ENCODE measurements at regions of chr13 and their contacts with region 1.

Region 1: GRCh38 chr13:27251166-27252091 is at the start of gene RPL21:
- DNase-seq: peak; percentile 85 to 97 (median 90)
- ATAC-seq: peak; percentile 89
- H3K4me3 ChIP-seq: peak within 1 kb of the TSS; percentile 69
- H3K4me3 Mint-ChIP-seq: peak within 1 kb of the TSS; percentile 95
- H3K27ac ChIP-seq: peak within 1 kb of the TSS; percentile 90 to 98
- H3K27ac Mint-ChIP-seq: peak within 1 kb of the TSS; percentile 99
- H3K4me1 ChIP-seq: peaks cover 23% of the 10 kb centered on the region
- H3K4me1 Mint-ChIP-seq: peaks cover 65% of the 10 kb centered on the region
- H3K27me3 ChIP-seq: no peaks in the 10 kb centered on the region
- H3K27me3 Mint-ChIP-seq: no peaks in the 10 kb centered on the region
- CTCF ChIP-seq: no peak
- total RNA-seq, gene RPL21: 2,736 to 2,941 TPM

Region 2: DNA sequence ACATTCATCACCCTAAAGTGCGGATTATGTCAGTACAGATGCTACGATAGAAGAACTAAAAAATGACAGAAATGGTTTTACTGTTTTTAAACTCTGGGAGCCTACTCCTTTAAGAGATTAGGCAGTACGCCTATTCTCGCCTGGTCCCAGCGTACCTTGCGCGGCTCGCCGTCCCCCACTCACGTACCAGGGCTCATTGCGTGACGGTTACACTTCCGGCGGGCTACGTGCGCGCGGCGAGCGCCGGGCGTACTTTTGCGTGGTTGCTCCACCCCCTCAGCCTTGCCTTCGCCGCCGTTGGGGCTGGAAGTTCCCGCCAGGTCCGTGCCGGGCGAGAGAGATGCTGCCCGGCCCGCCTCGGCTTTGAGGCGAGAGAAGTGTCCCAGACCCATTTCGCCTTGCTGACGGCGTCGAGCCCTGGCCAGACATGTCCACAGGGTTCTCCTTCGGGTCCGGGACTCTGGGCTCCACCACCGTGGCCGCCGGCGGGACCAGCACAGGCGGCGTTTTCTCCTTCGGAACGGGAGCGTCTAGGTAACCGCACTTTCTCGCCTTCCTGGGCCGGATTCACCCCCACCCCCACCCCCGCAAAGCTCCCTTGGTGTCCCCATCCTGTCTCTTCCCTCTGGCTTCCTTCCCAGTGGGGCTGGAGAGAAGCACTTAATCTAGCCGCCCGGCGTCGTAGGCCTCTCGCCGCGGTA is 1949.9 kb before region 1 on chr13 and contains the start of gene NUP58:
- CTCF ChIA-PET with region 1: no interaction called
- POLR2A ChIA-PET with region 1: no interaction called
- intact Hi-C with region 1: loop called in 1 of 2 experiments (anchors 10 kb)
- DNase-seq: peak; percentile 87 to 98 (median 90)
- ATAC-seq: peak; percentile 97
- H3K4me3 ChIP-seq: peak within 1 kb of the TSS; percentile 80
- H3K4me3 Mint-ChIP-seq: peak within 1 kb of the TSS; percentile 99
- H3K27ac ChIP-seq: peak within 1 kb of the TSS; percentile 92 to 94
- H3K27ac Mint-ChIP-seq: peak within 1 kb of the TSS; percentile 95
- H3K4me1 ChIP-seq: peaks cover 26% of the 10 kb centered on the region
- H3K4me1 Mint-ChIP-seq: peaks cover 49% of the 10 kb centered on the region
- H3K27me3 ChIP-seq: peaks cover 0 to 4% of the 10 kb centered on the region in 2 experiments
- H3K27me3 Mint-ChIP-seq: peaks cover 14% of the 10 kb centered on the region
- CTCF ChIP-seq: no peak
- total RNA-seq, gene NUP58: 56.5 to 60.9 TPM

Region 3: GRCh38 chr13:26253787-26254582 is 997.4 kb before region 1 on chr13 and contains the start of gene CDK8:
- CTCF ChIA-PET with region 1: no interaction called
- POLR2A ChIA-PET with region 1: no interaction called
- intact Hi-C with region 1: loop called in 1 of 2 experiments (anchors 10 kb)
- DNase-seq: peak; percentile 76 to 94 (median 86)
- ATAC-seq: peak; percentile 84
- H3K4me3 ChIP-seq: peak within 1 kb of the TSS; percentile 73
- H3K4me3 Mint-ChIP-seq: peak within 1 kb of the TSS; percentile 94
- H3K27ac ChIP-seq: peak within 1 kb of the TSS; percentile 78 to 84
- H3K27ac Mint-ChIP-seq: peak within 1 kb of the TSS; percentile 84
- H3K4me1 ChIP-seq: peaks cover 12% of the 10 kb centered on the region
- H3K4me1 Mint-ChIP-seq: peaks cover 42% of the 10 kb centered on the region
- H3K27me3 ChIP-seq: no peaks in the 10 kb centered on the region
- H3K27me3 Mint-ChIP-seq: no peaks in the 10 kb centered on the region
- CTCF ChIP-seq: no peak
- total RNA-seq, gene CDK8: 6.0 to 6.7 TPM

Region 4: DNA sequence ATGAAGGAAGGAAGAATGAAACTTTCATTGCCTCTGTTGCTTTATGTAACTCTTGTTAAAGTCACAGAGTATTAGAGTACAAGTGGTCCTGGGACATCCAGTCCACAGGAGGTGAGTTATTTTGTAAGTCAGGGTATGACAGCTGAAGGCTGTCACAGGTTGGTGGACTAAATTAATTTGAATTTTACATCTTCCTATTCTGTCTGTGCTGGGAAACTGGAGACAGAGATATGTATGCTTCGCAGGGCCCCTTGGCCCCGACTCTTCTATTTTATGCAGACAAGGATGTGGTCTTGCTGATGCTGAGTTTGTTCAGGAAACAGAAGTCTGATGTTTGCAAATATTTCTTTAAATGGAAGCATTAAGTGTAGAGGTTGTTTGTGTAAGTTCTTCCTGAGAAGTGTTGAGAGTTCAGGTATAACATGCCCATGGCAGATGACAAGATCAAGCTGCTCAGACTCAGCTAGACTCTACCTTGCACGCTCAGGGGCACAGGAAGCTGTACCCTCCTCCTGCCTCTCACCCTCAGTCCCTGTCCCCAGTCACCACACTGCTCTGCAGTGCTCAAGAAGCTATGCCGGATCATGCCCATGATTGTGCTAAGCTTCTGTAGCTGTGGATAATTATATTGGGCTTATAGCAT is 42.6 kb after region 1 on chr13:
- CTCF ChIA-PET with region 1: no interaction called
- POLR2A ChIA-PET with region 1: interaction called, 10 read pairs
- intact Hi-C with region 1: no loop called
- DNase-seq: peak in 9 of 14 experiments; percentile 9 to 50 (median 29)
- ATAC-seq: peak; percentile 77
- H3K4me3 ChIP-seq: no peak overlapping the region
- H3K4me3 Mint-ChIP-seq: peak overlapping the region; percentile 13
- H3K27ac ChIP-seq: peak overlapping the region; percentile 52 to 66
- H3K27ac Mint-ChIP-seq: peak overlapping the region; percentile 86
- H3K4me1 ChIP-seq: peaks cover 31% of the 10 kb centered on the region
- H3K4me1 Mint-ChIP-seq: peaks cover 33% of the 10 kb centered on the region
- H3K27me3 ChIP-seq: peaks cover 0 to 2% of the 10 kb centered on the region in 2 experiments
- H3K27me3 Mint-ChIP-seq: no peaks in the 10 kb centered on the region
- CTCF ChIP-seq: no peak

Region 5: GRCh38 chr13:27339299-27339698 is 87.9 kb after region 1 on chr13:
- CTCF ChIA-PET with region 1: interaction called, 4 read pairs
- POLR2A ChIA-PET with region 1: interaction called, 3 read pairs
- intact Hi-C with region 1: loop called in 1 of 2 experiments (anchors 5 kb)
- DNase-seq: peak in 13 of 14 experiments; percentile 20 to 68 (median 39)
- ATAC-seq: peak; percentile 86
- H3K4me3 ChIP-seq: no peak overlapping the region
- H3K4me3 Mint-ChIP-seq: no peak overlapping the region
- H3K27ac ChIP-seq: no peak overlapping the region
- H3K27ac Mint-ChIP-seq: no peak overlapping the region
- H3K4me1 ChIP-seq: no peaks in the 10 kb centered on the region
- H3K4me1 Mint-ChIP-seq: peaks cover 5% of the 10 kb centered on the region
- H3K27me3 ChIP-seq: peaks cover 0 to 4% of the 10 kb centered on the region in 2 experiments
- H3K27me3 Mint-ChIP-seq: peaks cover 6% of the 10 kb centered on the region
- CTCF ChIP-seq: peak; percentile 70

Region 6: GRCh38 chr13:27449936-27450828 is 198.8 kb after region 1 on chr13 and contains the start of gene MTIF3:
- CTCF ChIA-PET with region 1: no interaction called
- POLR2A ChIA-PET with region 1: interaction called, 5 read pairs
- intact Hi-C with region 1: loop called in 1 of 2 experiments (anchors 5 kb)
- DNase-seq: peak; percentile 95 to 99 (median 97)
- ATAC-seq: peak; percentile 79
- H3K4me3 ChIP-seq: peak within 1 kb of the TSS; percentile 83
- H3K4me3 Mint-ChIP-seq: peak within 1 kb of the TSS; percentile 98
- H3K27ac ChIP-seq: peak within 1 kb of the TSS; percentile 95 to 97
- H3K27ac Mint-ChIP-seq: peak within 1 kb of the TSS; percentile 97
- H3K4me1 ChIP-seq: peaks cover 58% of the 10 kb centered on the region
- H3K4me1 Mint-ChIP-seq: peaks cover 74% of the 10 kb centered on the region
- H3K27me3 ChIP-seq: no peaks in the 10 kb centered on the region
- H3K27me3 Mint-ChIP-seq: no peaks in the 10 kb centered on the region
- CTCF ChIP-seq: peak; percentile 31
- total RNA-seq, gene MTIF3: 13.6 to 14.5 TPM

Region 7: DNA sequence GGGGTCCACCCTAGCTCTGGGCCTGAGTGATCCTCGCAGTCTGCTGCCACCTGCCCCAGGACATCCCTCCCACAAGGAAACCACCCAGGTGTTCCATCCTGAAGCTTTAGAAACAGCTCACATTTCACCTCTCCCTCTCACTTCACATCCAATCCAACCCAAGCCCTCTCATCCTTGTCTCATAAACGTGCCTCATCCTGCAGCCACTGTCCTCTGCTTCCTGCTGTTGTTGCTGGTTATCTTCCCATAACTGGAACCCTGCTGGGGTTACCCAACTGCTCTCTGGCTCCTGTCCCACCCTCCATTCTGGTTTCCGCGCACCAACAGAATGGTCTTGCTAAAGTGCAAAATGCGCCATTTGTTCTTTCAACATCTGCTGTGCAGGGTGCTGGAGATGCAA is 258.7 kb after region 1 on chr13:
- CTCF ChIA-PET with region 1: no interaction called
- POLR2A ChIA-PET with region 1: no interaction called
- intact Hi-C with region 1: no loop called
- DNase-seq: no peak
- ATAC-seq: no peak
- H3K4me3 ChIP-seq: no peak overlapping the region
- H3K4me3 Mint-ChIP-seq: no peak overlapping the region
- H3K27ac ChIP-seq: no peak overlapping the region
- H3K27ac Mint-ChIP-seq: no peak overlapping the region
- H3K4me1 ChIP-seq: no peaks in the 10 kb centered on the region
- H3K4me1 Mint-ChIP-seq: no peaks in the 10 kb centered on the region
- H3K27me3 ChIP-seq: no peaks in the 10 kb centered on the region
- H3K27me3 Mint-ChIP-seq: peaks cover 11% of the 10 kb centered on the region
- CTCF ChIP-seq: no peak

Region 8: DNA sequence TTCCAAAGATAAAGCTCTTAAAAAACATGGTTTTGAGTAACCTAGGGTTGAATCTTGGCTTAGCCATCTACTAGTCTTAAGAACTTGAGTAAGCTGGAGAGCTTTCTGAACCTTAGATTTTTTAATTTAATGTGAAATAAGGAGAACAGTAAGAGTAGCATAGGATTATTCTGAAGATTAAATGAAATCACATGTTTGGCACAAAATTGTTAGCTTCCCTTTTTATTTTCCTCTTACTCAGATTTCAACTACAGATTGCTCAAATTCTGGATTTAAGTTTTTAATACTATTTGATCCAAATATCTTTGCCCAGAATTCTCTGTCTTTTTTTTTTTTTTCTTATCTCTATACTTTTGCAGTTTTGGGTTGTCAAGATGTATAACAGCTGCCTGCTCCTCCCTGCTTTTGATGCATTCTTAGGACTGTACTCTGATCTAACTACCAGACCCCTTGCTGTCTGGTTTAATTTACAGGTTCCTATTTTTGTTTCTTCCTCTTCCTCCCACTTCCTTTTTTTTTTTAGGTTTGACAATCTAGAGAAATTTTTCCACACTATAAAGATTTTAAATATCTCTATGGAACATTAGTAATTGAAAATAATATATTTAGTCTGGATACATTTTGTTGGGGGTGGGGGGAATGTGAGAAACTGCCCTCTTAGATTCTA is 1419.8 kb after region 1 on chr13:
- CTCF ChIA-PET with region 1: no interaction called
- POLR2A ChIA-PET with region 1: no interaction called
- intact Hi-C with region 1: loop called in 1 of 2 experiments (anchors 10 kb)
- DNase-seq: no peak
- ATAC-seq: no peak
- H3K4me3 ChIP-seq: no peak overlapping the region
- H3K4me3 Mint-ChIP-seq: no peak overlapping the region
- H3K27ac ChIP-seq: no peak overlapping the region
- H3K27ac Mint-ChIP-seq: no peak overlapping the region
- H3K4me1 ChIP-seq: no peaks in the 10 kb centered on the region
- H3K4me1 Mint-ChIP-seq: peaks cover 28% of the 10 kb centered on the region
- H3K27me3 ChIP-seq: no peaks in the 10 kb centered on the region
- H3K27me3 Mint-ChIP-seq: no peaks in the 10 kb centered on the region
- CTCF ChIP-seq: no peak

Measured in CD4-positive, alpha-beta T cell (primary cell).